Mucosa of descending colon (tissue), 3 donors: ENCODE measurements at regions of chr17 and their contacts with region 1.

Region 1: DNA sequence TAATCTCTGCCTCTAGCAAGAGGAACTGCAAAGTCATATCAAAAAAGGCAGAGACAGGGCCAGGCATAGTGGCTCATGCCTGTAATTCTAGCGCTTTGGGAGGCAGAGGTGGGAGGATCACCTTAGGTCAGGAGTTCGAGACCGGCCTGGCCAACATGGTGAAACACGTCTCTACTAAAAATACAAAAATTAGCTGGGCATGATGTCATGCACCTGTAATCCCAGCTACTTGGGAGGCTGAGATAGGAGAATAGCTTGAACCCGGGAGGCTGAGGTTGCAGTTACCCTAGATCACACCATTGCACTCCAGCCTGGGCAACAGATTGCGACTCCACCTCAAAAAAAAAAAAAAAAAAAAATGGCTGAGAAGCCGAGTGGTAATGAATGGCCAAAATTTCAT is 687.8 kb upstream of the CA10 start:
- DNase-seq: no peak
- ATAC-seq: no peak
- H3K4me3 ChIP-seq: no peak overlapping the region
- H3K4me1 ChIP-seq: no peaks in the 10 kb centered on the region
- CTCF ChIP-seq: no peak

Region 2: GRCh38 chr17:52885882-52886281 is 39.6 kb after region 1 on chr17:
- intact Hi-C with region 1: no loop called
- DNase-seq: no peak
- ATAC-seq: no peak
- H3K4me3 ChIP-seq: no peak overlapping the region
- H3K4me1 ChIP-seq: no peaks in the 10 kb centered on the region
- CTCF ChIP-seq: no peak

Region 3: GRCh38 chr17:52923658-52924057 is 77.3 kb after region 1 on chr17:
- intact Hi-C with region 1: loop called in 1 of 2 experiments (anchors 10 kb)
- DNase-seq: no peak
- ATAC-seq: no peak
- H3K4me3 ChIP-seq: no peak overlapping the region
- H3K4me1 ChIP-seq: no peaks in the 10 kb centered on the region
- CTCF ChIP-seq: no peak